AG04450 (cell line): ENCODE measurements at regions of chr12 and their contacts with region 1.

Region 1: DNA sequence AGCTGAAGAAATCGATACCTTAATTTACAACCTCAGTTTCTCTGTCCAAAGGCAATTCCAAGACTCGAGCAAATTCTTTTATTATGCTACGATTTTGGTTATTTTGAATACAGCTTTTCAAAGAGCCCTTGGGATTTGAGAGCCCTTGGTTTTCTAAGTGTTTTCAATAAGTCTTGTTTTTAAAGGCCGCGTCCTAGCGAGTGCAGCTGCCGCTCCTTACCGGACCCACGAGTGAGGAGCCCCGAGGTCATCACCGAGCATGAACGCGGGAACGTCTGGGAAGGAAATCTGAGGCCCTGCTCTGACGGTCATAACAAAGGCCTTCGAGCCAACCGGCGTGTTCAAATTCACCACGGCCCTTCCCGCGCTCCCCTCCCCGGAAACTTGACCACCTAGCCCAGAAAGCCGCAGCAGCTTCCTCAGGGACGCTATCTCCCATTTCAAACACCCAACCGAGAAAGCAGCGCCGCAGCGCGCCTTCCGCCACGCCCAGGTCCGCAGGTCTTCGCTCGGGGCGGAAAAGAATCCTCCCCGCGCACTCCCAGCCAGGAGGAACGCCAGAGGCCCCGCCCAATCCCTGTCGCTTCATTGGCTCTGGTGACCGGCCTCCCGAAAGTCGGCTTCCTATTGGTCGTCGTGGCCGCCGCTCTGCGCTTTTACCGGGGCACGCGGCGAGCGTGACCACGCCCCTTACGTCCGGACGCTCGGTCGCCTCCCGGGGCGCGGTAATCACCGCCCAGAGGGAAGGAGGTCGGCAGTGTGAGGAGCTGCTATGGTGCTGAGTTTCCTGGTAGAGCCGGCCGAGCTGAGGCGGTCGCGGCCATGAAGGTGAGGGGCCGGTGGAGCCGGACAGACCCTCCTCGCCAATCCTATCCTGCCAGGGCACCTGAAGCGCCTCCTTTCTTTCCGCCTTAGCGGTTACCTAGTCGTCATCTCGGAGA is at the start of gene RNF34:
- DNase-seq: peak; percentile 94
- H3K4me3 ChIP-seq: peak within 1 kb of the TSS; percentile 86
- H3K27ac ChIP-seq: peak within 1 kb of the TSS; percentile 85
- H3K27me3 ChIP-seq: no peaks in the 10 kb centered on the region
- CTCF ChIP-seq: no peak
- polyA plus RNA-seq, gene RNF34: 47.4 and 55.3 TPM in 2 replicates

Region 2: DNA sequence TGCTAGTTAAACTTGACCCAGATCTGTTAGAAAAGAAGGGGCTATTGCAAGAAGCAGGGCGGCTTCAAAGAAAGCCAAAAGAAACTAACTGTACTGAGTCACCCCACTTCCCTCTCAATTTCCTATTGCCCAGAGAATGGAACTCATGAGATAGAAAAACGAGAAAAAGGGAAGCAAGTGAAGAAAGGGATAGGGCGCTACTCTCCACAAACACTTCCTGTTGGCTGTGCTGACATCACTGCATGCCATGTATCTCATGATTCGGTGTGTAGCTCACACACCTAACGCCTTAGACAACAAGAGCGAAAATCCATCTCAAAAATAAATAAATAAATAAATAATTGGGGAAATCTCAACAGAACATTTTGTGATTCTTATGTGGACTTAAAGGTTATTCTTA is 202.8 kb before region 1 on chr12:
- CTCF ChIA-PET with region 1: no interaction called
- POLR2A ChIA-PET with region 1: no interaction called
- DNase-seq: no peak
- H3K4me3 ChIP-seq: no peak overlapping the region
- H3K27ac ChIP-seq: no peak overlapping the region
- H3K27me3 ChIP-seq: peaks cover 4% of the 10 kb centered on the region
- CTCF ChIP-seq: no peak

Region 3: GRCh38 chr12:121351820-121352681 is 47.6 kb before region 1 on chr12 and contains the start of gene ANAPC5:
- CTCF ChIA-PET with region 1: interaction called, 6 read pairs
- POLR2A ChIA-PET with region 1: interaction called, 35 read pairs
- DNase-seq: peak; percentile 95
- H3K4me3 ChIP-seq: peak within 1 kb of the TSS; percentile 95
- H3K27ac ChIP-seq: peak within 1 kb of the TSS; percentile 87
- H3K27me3 ChIP-seq: no peaks in the 10 kb centered on the region
- CTCF ChIP-seq: no peak
- polyA plus RNA-seq, gene ANAPC5: 145 and 146 TPM in 2 replicates

Region 4: GRCh38 chr12:121432740-121433480 is 33.2 kb after region 1 on chr12:
- CTCF ChIA-PET with region 1: no interaction called
- POLR2A ChIA-PET with region 1: no interaction called
- DNase-seq: no peak
- H3K4me3 ChIP-seq: no peak overlapping the region
- H3K27ac ChIP-seq: no peak overlapping the region
- H3K27me3 ChIP-seq: no peaks in the 10 kb centered on the region
- CTCF ChIP-seq: no peak

Region 5: DNA sequence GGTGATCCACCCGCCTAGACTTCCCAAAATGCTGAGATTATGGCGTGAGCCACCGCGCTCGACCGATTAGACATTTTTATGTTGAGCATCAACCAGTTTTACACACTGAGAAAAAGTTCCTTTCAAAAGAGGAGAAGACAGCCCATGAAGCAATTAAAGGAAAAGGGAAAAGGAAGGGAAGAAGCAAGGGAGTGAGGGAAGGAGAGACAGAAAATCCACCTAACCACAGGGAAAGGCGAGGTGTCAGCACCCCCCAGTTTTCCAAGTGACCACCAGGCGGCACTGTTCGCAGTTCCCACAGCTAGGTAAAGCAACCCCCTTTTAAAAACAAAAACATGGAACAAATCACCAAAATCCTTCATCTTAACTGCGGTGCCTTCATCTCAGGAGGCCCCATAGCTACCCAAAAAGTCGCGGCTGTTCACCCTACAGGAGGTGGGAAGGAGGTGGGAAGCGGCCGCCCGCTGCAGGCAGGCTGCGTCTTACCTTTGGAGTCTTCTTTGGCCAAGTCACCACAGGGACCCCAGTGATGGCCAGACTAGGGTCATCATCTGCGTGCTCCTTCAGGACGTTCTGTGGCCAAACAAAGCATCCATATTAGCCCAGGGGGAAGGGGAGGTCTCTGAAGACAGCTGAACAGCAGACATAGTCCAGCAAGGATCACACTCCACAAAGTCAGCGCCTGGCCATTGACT is 94.6 kb after region 1 on chr12:
- CTCF ChIA-PET with region 1: no interaction called
- POLR2A ChIA-PET with region 1: no interaction called
- DNase-seq: peak; percentile 8
- H3K4me3 ChIP-seq: no peak overlapping the region
- H3K27ac ChIP-seq: no peak overlapping the region
- H3K27me3 ChIP-seq: no peaks in the 10 kb centered on the region
- CTCF ChIP-seq: peak; percentile 94

Region 6: DNA sequence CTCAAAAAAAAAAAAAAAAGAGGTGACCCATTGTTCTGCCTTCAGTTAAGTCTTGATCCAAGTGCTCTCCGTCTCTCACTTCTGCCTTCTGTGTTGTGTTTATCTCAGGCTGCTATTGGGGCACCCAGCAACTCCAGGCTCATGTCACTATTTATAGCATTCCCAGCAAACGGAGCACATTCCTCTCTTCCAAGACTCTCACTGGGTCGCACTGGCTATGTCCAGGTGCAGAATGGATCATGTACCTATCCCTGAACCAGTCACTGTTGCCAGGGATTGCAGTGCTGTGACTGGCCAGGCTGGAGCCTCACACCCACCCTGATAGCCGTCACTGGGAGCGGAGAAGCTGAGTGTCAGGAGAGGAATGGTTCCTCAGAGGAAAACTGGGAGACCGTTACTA is 362.6 kb after region 1 on chr12:
- CTCF ChIA-PET with region 1: no interaction called
- POLR2A ChIA-PET with region 1: no interaction called
- DNase-seq: no peak
- H3K4me3 ChIP-seq: no peak overlapping the region
- H3K27ac ChIP-seq: no peak overlapping the region
- H3K27me3 ChIP-seq: no peaks in the 10 kb centered on the region
- CTCF ChIP-seq: no peak